ENCODE measurements at regions of chr21 and their contacts with region 1.

Region 1: DNA sequence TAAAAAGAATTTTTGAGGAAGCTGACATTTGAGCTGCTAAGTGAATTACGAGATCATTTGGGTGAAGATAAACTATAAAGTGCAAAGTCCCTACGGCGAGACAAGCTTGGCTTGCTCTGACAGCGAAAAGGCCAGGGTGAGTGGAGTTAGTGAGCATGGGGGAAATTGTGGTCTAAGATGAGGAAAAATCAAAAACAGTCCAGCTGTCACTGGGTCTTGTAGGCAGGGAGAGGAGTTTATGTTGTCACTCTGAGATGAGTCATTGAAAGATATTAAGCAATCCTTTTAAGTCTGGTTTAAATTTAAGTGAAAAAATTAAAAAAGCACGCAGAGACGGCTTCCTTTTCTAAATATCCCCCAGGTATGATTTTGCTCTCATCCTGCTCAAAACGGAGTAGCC is 601.9 kb downstream of the MRPL39 start:
- DNase-seq: no peak
- H3K4me3 Mint-ChIP-seq: no peak overlapping the region
- H3K27ac Mint-ChIP-seq: no peak overlapping the region
- H3K4me1 Mint-ChIP-seq: no peaks in the 10 kb centered on the region
- H3K27me3 Mint-ChIP-seq: no peaks in the 10 kb centered on the region

Region 2: DNA sequence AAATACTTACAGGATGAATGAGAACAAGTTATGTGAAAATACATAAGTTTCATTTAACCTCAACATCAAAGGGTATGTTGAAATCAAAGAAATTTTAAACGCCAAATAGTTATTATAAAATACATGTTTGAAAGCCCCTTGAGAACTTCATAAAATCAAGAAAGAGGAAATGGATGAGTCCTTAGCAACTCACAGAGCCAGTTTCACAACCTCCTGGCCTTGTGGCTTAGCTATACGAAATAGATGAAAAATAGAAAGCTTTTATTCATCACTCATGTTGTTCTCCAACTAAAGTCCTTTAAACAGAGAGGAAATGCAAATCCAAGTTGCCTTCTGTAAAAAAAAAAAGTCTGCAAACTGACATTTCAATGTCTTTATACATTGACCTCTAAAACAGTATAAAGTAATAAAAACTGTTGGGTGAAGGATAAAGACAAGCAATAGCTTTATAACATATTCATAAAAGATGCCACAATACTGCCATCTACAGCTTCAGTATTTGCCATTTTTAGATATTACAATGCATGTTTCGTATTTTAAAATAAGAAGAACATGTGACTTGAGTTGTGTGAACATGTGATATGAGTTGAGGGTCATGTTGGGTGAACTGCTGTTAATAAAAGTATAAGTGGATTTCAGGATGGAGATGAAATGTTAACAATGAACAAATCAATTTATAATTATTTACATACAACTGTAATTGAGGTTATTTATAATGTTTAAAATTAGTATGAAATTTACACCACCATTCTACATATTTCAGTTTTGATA is 245.9 kb before region 1 on chr21:
- intact Hi-C with region 1: no loop called
- DNase-seq: no peak
- H3K4me3 Mint-ChIP-seq: no peak overlapping the region
- H3K27ac Mint-ChIP-seq: no peak overlapping the region
- H3K4me1 Mint-ChIP-seq: no peaks in the 10 kb centered on the region
- H3K27me3 Mint-ChIP-seq: no peaks in the 10 kb centered on the region

Region 3: DNA sequence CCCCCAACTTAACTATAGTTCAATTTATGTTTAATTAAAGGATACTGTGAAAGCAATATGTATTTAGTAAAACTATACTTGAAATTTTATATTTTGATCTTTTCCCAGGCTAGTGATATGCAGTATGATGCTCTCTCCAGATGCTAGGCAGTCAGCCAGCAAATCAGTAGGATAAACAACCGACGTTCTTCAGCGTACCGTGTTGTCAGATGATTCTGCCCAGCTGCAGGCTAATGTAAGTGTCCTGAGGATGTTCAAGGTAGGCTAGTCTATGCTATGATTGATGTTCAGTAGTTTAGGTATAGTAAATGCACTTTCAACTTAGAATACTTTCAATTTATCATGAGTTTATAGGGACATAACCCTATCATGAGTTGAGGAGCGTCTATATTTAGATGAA is 160.7 kb before region 1 on chr21:
- intact Hi-C with region 1: no loop called
- DNase-seq: no peak
- H3K4me3 Mint-ChIP-seq: no peak overlapping the region
- H3K27ac Mint-ChIP-seq: no peak overlapping the region
- H3K4me1 Mint-ChIP-seq: no peaks in the 10 kb centered on the region
- H3K27me3 Mint-ChIP-seq: no peaks in the 10 kb centered on the region

Region 4: GRCh38 chr21:25062061-25062460 is 56.7 kb after region 1 on chr21:
- intact Hi-C with region 1: loop called (anchors 10 kb)
- DNase-seq: no peak
- H3K4me3 Mint-ChIP-seq: no peak overlapping the region
- H3K27ac Mint-ChIP-seq: no peak overlapping the region
- H3K4me1 Mint-ChIP-seq: no peaks in the 10 kb centered on the region
- H3K27me3 Mint-ChIP-seq: no peaks in the 10 kb centered on the region

Measured in activated T-helper 2 cell treated with anti-CD3 and anti-CD28 coated beads, Interferon-gamma antibody, Interleukin-2, Interleukin-4, amounts not matched to agents 10 μg/mL and 5 μg/mL and 100 μg/mL, durations not matched to agents 14 hours and 24 hours and 36 hours (primary cell).